ENCODE measurements at regions of chr2 and their contacts with region 1.

Region 1: GRCh38 chr2:60581433-60582282 is 28.2 kb upstream of the BCL11A start:
- ATAC-seq: peak; percentile 96 to 99 (median 98)
- H3K4me3 ChIP-seq: peak overlapping the region; percentile 10 to 36 (median 25)
- H3K27ac ChIP-seq: no peak overlapping the region
- H3K4me1 ChIP-seq: peaks cover 0 to 2% of the 10 kb centered on the region in 2 donors

Region 2: DNA sequence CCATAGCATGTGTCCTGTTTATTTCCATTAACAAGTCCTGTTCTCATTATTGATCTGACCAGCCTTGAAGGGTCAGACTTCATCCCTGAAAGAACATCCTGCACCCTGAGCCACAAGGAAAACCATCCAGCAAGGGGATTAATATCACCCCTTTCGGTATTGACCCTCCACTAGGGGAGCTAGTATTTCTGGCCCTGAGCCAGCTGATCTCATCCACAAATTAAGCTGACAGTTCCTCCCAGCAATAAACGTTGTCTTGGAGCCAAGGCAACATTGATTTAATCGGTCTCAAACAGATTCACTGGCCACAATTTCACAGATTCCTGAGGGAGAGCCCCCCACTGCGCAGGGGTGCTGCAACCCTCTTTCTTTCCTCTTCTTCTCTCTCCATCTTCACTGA is 1987.5 kb before region 1 on chr2:
- in situ Hi-C with region 1: loop called in 1 of 9 experiments (anchors 25 kb)
- ATAC-seq: peak in 6 of 8 experiments; percentile 23 to 59 (median 48)
- H3K4me3 ChIP-seq: no peak overlapping the region
- H3K27ac ChIP-seq: no peak overlapping the region
- H3K4me1 ChIP-seq: peaks cover 0 to 4% of the 10 kb centered on the region in 2 donors

Region 3: GRCh38 chr2:58762176-58762781 is 1819.4 kb before region 1 on chr2:
- in situ Hi-C with region 1: loop called in 1 of 9 experiments (anchors 25 kb)
- ATAC-seq: peak; percentile 77 to 99 (median 90)
- H3K4me3 ChIP-seq: no peak overlapping the region
- H3K27ac ChIP-seq: no peak overlapping the region
- H3K4me1 ChIP-seq: no peaks in the 10 kb centered on the region

Region 4: DNA sequence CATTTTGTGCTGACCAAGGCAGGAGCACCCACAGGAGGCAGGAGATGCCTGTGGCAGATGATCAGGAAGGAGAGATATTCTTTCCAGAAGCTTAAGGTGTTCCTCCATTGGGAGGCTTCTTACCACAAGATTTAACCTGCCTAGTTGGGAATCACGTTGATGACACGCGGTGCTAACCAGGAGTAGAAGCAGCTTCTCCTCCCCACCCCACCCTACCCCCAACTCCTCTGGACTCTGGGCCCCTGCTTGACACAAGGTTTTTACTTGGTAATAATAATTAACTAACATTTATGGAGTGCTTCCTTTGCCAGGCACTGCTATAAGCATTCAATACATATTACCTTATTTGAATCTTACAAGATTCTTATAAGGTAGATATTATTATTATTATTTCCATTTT is 111.9 kb after region 1 on chr2:
- in situ Hi-C with region 1: no loop called
- ATAC-seq: no peak
- H3K4me3 ChIP-seq: no peak overlapping the region
- H3K27ac ChIP-seq: no peak overlapping the region
- H3K4me1 ChIP-seq: no peaks in the 10 kb centered on the region